ENCODE measurements at regions of chr10 and their contacts with region 1.

Region 1: GRCh38 chr10:69232252-69232651 is 12.1 kb downstream of the HKDC1 start:
- DNase-seq: no peak
- ATAC-seq: no peak
- H3K4me3 ChIP-seq: no peak overlapping the region
- H3K27ac ChIP-seq: no peak overlapping the region
- H3K4me1 ChIP-seq: peaks cover 21% of the 10 kb centered on the region
- H3K27me3 ChIP-seq: no peaks in the 10 kb centered on the region
- CTCF ChIP-seq: no peak
- EP300 ChIP-seq: no peak
- POLR2A ChIP-seq: no peak
- RAD21 ChIP-seq: no peak

Region 2: DNA sequence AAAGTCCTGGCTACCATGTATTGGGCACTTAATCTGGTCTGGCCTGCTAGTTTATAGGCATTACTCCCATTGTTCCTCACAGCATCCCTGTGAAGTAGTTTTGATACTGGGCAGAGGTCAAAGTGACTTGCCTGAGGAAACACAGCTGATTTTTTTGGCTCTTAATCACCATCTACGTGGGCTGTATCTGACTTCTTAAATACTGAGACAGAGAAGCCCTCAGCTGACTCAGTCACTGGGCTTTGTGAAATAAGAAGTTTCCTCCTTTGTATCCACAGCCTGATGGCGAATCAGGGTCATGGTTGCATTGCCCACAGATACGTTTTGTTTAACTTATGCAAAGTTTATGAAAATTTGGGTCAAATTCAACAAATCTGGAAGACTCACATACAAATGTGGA is 171.3 kb after region 1 on chr10:
- CTCF ChIA-PET with region 1: interaction called, 8 read pairs
- POLR2A ChIA-PET with region 1: no interaction called
- RAD21 ChIA-PET with region 1: interaction called, 9 read pairs
- SMC1A ChIA-PET with region 1: interaction called, 6 read pairs
- in situ Hi-C with region 1: loop called (anchors 5 kb)
- intact Hi-C with region 1: no loop called
- DNase-seq: no peak
- ATAC-seq: no peak
- H3K4me3 ChIP-seq: no peak overlapping the region
- H3K27ac ChIP-seq: no peak overlapping the region
- H3K4me1 ChIP-seq: peaks cover 7% of the 10 kb centered on the region
- H3K27me3 ChIP-seq: no peaks in the 10 kb centered on the region
- CTCF ChIP-seq: no peak
- EP300 ChIP-seq: no peak
- POLR2A ChIP-seq: no peak
- RAD21 ChIP-seq: no peak

Measured in GM12878 (cell line).